ENCODE measurements at regions of chr12 and their contacts with region 1.

Region 1: DNA sequence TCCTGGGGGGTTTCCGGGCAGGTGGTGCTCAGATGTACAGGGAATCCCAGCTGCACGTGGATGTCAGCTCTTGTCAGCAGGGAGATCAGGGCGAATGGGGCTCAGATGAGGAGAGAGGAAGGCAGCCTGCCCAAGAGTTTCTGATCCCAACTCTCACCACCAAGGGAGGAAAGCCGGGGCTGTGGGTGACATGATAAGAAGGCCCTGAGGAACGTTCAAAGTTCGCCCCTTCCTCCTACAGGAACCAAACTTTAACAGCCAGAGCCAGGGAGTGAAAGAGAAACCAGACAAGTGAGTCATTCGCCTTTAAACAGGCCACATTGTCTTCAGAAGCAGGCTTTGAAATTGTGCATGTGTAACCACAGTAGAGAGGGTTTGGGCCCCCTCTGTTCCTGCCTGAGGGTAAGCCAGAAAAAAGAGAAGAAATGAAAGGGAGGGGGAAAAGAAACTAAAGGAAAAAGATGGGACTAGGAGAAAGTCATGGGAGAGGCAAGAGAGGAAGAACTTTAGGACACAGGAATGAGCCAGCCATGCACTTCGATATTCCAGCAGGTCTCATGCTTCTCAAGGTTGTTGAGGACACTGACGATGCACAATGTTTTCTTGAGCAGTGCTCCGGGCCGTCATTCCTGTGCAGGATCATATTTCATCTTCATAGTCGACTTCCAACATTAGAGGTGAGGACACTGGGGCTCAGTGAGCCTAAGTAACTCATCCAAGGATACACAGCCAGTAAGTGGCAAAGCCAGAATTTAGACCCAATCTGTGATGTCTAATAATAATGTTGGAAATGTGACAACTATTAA is 691.4 kb upstream of the TBX3 start:
- DNase-seq: peak; percentile 17 to 53
- H3K4me3 ChIP-seq: no peak overlapping the region
- H3K4me3 Mint-ChIP-seq: peak overlapping the region; percentile 11
- H3K27ac Mint-ChIP-seq: peak overlapping the region; percentile 59
- H3K4me1 ChIP-seq: peaks cover 26% of the 10 kb centered on the region
- H3K4me1 Mint-ChIP-seq: peaks cover 32% of the 10 kb centered on the region
- H3K27me3 ChIP-seq: no peaks in the 10 kb centered on the region; the same call in 1 of the 2 replicates
- H3K27me3 Mint-ChIP-seq: no peaks in the 10 kb centered on the region
- CTCF ChIP-seq: no peak

Region 2: GRCh38 chr12:115320967-115321366 is 54.4 kb before region 1 on chr12:
- CTCF ChIA-PET with region 1: no interaction called
- POLR2A ChIA-PET with region 1: no interaction called
- intact Hi-C with region 1: loop called (anchors 2 kb)
- DNase-seq: no peak
- H3K4me3 ChIP-seq: no peak overlapping the region
- H3K4me3 Mint-ChIP-seq: no peak overlapping the region
- H3K27ac Mint-ChIP-seq: no peak overlapping the region
- H3K4me1 ChIP-seq: no peaks in the 10 kb centered on the region
- H3K4me1 Mint-ChIP-seq: no peaks in the 10 kb centered on the region
- H3K27me3 ChIP-seq: no peaks in the 10 kb centered on the region
- H3K27me3 Mint-ChIP-seq: no peaks in the 10 kb centered on the region
- CTCF ChIP-seq: no peak

Region 3: GRCh38 chr12:115521771-115522409 is 146.5 kb after region 1 on chr12:
- CTCF ChIA-PET with region 1: no interaction called
- POLR2A ChIA-PET with region 1: no interaction called
- intact Hi-C with region 1: no loop called
- DNase-seq: no peak
- H3K4me3 ChIP-seq: no peak overlapping the region
- H3K4me3 Mint-ChIP-seq: no peak overlapping the region
- H3K27ac Mint-ChIP-seq: no peak overlapping the region
- H3K4me1 ChIP-seq: no peaks in the 10 kb centered on the region
- H3K4me1 Mint-ChIP-seq: no peaks in the 10 kb centered on the region
- H3K27me3 ChIP-seq: no peaks in the 10 kb centered on the region
- H3K27me3 Mint-ChIP-seq: no peaks in the 10 kb centered on the region
- CTCF ChIP-seq: no peak